ENCODE measurements at regions of chr7 and their contacts with region 1.

Region 1: GRCh38 chr7:98399890-98400541 is 874 bp downstream of the BAIAP2L1 start:
- DNase-seq: peak in 1 of 2 donors; percentile 47
- H3K4me3 ChIP-seq: peak overlapping the region; percentile 60 to 79 (median 74)
- H3K27ac ChIP-seq: peak overlapping the region; percentile 89 to 95 (median 92)
- H3K4me1 ChIP-seq: peaks cover 12 to 29% (median 14%) of the 10 kb centered on the region in 4 donors
- H3K27me3 ChIP-seq: peaks cover 0 to 44% (median 9%) of the 10 kb centered on the region in 3 donors
- CTCF ChIP-seq: no peak
- EP300 ChIP-seq: no peak
- POLR2A ChIP-seq: no peak

Region 2: DNA sequence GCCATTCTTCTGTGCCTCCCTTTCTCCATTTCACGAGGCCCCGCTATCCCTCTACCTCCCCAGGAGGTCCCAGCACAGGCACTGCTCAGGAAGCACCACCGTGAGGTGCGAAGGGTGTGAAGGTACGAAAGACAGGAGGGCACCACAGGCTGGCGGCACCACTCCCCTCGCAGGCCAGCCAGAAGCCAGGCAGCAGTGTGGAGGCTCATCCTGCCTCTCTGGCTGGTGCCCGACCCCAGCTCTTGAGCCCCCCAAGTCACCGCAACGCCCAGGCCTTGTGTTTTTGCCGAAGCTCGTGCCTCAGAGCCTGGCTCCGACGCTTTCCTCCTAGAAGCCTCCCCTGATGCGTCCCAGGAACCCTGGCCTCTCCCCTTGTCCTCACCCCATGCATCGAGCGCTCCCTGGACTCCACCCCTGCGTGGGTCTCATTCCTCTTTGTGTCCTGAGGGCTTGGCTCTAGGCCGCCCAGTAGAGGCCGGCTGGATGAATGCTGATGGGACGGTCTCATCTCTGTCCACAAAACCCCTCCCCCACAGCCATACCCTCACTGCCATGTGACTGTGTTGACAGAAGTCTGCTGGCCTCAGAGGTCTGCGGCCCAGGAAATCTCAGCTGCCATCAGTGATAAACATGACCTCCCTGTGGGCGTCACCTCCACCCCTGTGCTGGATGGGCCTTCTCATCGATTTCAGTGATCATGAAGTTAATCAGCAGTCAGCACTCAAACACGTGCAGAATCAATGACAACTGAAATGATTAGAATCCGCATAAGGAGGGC is 99.2 kb before region 1 on chr7:
- intact Hi-C with region 1: loop called (anchors 10 kb)
- DNase-seq: no peak
- H3K4me3 ChIP-seq: no peak overlapping the region
- H3K27ac ChIP-seq: no peak overlapping the region
- H3K4me1 ChIP-seq: peaks cover 2 to 23% (median 11%) of the 10 kb centered on the region in 4 donors
- H3K27me3 ChIP-seq: no peaks in the 10 kb centered on the region
- CTCF ChIP-seq: no peak
- EP300 ChIP-seq: no peak
- POLR2A ChIP-seq: no peak